Activated CD8-positive, alpha-beta T cell treated with anti-CD3 and anti-CD28 coated beads for 36 hours (primary cell): ENCODE measurements at regions of chr15 and their contacts with region 1.

Region 1: DNA sequence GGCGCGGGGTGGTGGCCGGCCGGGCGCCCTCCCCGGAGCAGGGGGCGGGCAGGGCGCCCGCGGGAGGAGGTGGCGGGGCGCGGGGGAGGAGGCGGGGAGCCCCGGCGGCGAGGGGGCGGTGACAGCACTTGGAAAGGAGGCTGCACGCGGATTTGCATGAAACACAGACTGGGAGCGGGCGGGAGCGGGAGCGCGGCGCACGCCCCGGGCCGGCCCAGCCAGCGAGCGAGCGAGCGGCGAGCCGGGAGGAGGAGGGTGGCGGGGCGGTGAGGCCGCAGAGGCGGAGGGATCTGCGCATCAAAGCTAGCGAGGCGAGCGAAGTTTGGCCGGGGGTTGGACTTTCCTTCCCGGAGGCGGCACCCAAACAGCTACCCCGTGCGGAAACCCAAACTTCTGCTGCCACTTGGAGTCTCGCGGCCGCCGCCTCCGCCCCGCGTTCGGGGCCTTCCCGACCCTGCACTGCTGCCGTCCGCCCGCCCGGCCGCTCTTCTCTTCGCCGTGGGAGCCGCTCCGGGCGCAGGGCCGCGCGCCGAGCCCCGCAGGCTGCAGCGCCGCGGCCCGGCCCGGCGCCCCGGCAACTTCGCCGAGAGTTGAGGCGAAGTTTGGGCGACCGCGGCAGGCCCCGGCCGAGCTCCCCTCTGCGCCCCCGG is at the start of gene SMAD3:
- DNase-seq: peak; percentile 80
- ATAC-seq: peak; percentile 51
- H3K4me3 Mint-ChIP-seq: peak within 1 kb of the TSS; percentile 92
- H3K27ac Mint-ChIP-seq: peak within 1 kb of the TSS; percentile 93
- H3K4me1 Mint-ChIP-seq: peaks cover 44% of the 10 kb centered on the region
- H3K27me3 Mint-ChIP-seq: peaks cover 15% of the 10 kb centered on the region
- CTCF ChIP-seq: no peak
- total RNA-seq, gene SMAD3: 22.3 to 24.7 TPM

Region 2: DNA sequence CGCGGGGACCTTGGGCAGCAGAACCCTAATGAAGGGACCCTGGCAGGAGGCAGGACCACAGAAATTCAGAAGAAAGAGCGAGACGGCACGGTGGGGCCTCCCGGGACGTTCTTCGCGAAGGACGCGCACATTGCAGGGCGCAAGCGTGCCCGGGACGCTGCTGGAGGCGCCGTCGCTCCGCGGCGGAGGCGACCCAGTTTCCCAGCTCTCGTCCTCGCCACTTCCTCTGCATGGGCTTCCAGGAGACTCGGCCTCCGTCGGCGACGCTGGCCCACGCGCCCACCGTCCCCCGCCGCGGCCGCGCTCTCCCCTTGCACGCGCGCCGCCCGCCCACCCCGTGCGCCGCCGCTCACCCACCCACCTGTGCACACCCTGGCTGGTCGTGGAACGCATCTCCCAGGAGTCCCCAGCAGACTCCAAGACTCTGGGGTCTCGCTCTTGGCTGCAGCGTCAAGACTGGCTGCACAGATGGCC is 32.0 kb before region 1 on chr15:
- CTCF ChIA-PET with region 1: interaction called, 4 read pairs
- POLR2A ChIA-PET with region 1: interaction called, 3 read pairs
- intact Hi-C with region 1: loop called (anchors 5 kb)
- DNase-seq: no peak
- ATAC-seq: peak; percentile 44
- H3K4me3 Mint-ChIP-seq: peak overlapping the region; percentile 57
- H3K27ac Mint-ChIP-seq: peak overlapping the region; percentile 1
- H3K4me1 Mint-ChIP-seq: peaks cover 23% of the 10 kb centered on the region
- H3K27me3 Mint-ChIP-seq: peaks cover 10% of the 10 kb centered on the region
- CTCF ChIP-seq: no peak

Region 3: DNA sequence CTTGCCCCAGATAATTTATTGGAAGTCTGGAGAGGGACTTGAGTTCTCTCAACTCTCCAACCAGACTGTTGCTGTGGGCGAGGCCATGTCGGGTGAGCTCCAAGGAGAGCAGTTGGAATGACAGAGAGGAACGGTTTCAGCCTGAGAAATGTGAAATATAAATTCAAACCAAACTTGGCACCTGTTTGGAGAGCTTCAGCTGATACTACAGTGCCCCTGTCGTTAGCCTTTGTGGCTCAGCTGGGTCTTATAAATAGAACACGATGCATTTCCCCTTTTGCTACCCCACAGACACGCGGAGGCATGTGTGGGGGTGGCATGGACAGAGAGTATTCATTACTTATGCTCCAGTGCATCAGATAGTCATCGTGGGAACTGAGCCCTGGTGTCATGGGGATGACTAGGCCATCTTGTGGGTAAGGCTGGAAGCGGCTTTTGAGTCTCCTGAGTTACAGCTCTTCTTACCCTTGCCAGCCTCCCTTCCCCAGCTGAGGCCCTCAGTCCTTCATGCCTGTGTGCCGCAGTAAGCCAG is 15.4 kb after region 1 on chr15:
- CTCF ChIA-PET with region 1: interaction called, 11 read pairs
- POLR2A ChIA-PET with region 1: interaction called, 40 read pairs
- intact Hi-C with region 1: no loop called
- DNase-seq: peak; percentile 84
- ATAC-seq: peak; percentile 29
- H3K4me3 Mint-ChIP-seq: no peak overlapping the region
- H3K27ac Mint-ChIP-seq: peak overlapping the region; percentile 69
- H3K4me1 Mint-ChIP-seq: peaks cover 72% of the 10 kb centered on the region
- H3K27me3 Mint-ChIP-seq: no peaks in the 10 kb centered on the region
- CTCF ChIP-seq: no peak